CD14-positive monocyte (primary cell): ENCODE measurements at regions of chr11 and their contacts with region 1.

Region 1: DNA sequence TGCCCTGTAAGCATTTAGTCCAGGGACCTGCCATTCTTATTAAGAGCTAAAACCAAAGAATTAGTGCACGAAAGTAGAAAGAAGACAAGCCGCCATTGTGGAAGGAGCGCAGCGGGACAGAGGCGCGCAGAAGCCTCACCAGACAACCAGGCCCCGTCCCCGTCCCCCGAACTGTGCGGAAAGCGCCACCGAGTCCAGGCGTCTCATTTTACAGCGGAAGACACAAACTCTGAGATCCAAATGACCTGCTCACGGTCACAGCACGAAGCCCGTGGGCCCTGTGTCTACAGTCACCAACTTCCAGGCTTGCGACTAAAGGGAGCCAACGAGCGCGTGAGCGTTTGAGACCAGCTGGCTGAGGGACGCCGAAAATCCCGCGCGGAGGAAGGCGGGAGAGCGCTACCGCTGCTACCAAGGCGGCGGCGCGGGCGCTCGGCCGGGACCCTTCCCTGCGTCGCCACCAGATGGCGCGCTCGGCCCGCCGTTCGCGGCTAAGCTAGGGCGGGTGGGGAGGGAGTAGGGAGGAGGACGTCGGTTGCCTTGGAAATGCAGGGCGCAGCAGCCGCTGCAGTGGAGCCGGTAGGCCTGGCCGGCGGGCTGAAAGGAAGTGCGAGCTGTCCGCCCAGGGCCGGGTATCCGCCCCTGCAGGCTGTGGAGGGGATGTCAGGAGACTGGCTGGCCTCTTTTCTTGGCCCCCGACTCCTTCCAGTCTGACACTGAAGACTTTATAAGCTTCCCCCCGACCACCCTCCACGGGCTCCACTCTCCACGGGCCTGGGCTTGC is 434 bp upstream of the CCDC83 start:
- DNase-seq: peak; percentile 93 to 95 (median 93)
- H3K4me3 ChIP-seq: peak overlapping the region; percentile 46 to 82 (median 52)
- H3K4me3 Mint-ChIP-seq: peak overlapping the region; percentile 93 to 96
- H3K27ac ChIP-seq: peak overlapping the region; percentile 61 to 76
- H3K27ac Mint-ChIP-seq: peak overlapping the region; percentile 77 to 93 (median 87)
- H3K4me1 ChIP-seq: peaks cover 10 to 15% of the 10 kb centered on the region in 2 donors
- H3K4me1 Mint-ChIP-seq: peaks cover 7% of the 10 kb centered on the region
- H3K27me3 ChIP-seq: no peaks in the 10 kb centered on the region
- H3K27me3 Mint-ChIP-seq: peaks cover 0 to 3% (median 0%) of the 10 kb centered on the region in 3 donors
- CTCF ChIP-seq: peak; percentile 95

Region 2: DNA sequence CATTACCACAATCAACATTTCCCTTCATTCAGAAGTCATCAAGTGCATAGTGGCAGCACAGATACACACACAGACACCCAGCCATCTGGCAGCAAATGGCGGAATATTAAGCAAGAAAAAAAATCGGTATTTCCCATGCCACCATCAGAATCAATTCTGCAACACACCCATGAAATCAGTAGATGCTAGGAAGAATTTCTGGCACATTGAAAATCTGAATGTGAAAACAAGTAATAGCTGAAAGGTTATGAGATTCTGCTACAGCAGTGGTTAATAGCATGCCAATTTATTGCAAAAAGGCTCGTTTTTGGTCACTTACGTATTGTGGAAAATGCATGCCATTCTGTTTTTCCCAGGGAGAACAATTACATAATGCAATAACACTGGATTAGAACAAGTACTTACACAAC is 123.0 kb after region 1 on chr11:
- intact Hi-C with region 1: loop called in 1 of 2 experiments (anchors 10 kb)
- DNase-seq: no peak
- H3K4me3 ChIP-seq: no peak overlapping the region
- H3K4me3 Mint-ChIP-seq: no peak overlapping the region
- H3K27ac ChIP-seq: no peak overlapping the region
- H3K27ac Mint-ChIP-seq: no peak overlapping the region
- H3K4me1 ChIP-seq: no peaks in the 10 kb centered on the region
- H3K4me1 Mint-ChIP-seq: no peaks in the 10 kb centered on the region
- H3K27me3 ChIP-seq: no peaks in the 10 kb centered on the region
- H3K27me3 Mint-ChIP-seq: no peaks in the 10 kb centered on the region
- CTCF ChIP-seq: no peak

Region 3: GRCh38 chr11:86218125-86219084 is 363.7 kb after region 1 on chr11:
- intact Hi-C with region 1: loop called in 1 of 2 experiments (anchors 10 kb)
- DNase-seq: peak; percentile 58 to 77 (median 76)
- H3K4me3 ChIP-seq: peak overlapping the region in 1 of 3 experiments; percentile 47
- H3K4me3 Mint-ChIP-seq: peak overlapping the region; percentile 56 to 73
- H3K27ac ChIP-seq: no peak overlapping the region
- H3K27ac Mint-ChIP-seq: peak overlapping the region in 3 of 7 donors; percentile 10 to 68 (median 51)
- H3K4me1 ChIP-seq: peaks cover 19 to 22% of the 10 kb centered on the region in 2 donors
- H3K4me1 Mint-ChIP-seq: peaks cover 28% of the 10 kb centered on the region
- H3K27me3 ChIP-seq: no peaks in the 10 kb centered on the region
- H3K27me3 Mint-ChIP-seq: peaks cover 0 to 2% (median 0%) of the 10 kb centered on the region in 3 donors
- CTCF ChIP-seq: peak; percentile 94

Region 4: DNA sequence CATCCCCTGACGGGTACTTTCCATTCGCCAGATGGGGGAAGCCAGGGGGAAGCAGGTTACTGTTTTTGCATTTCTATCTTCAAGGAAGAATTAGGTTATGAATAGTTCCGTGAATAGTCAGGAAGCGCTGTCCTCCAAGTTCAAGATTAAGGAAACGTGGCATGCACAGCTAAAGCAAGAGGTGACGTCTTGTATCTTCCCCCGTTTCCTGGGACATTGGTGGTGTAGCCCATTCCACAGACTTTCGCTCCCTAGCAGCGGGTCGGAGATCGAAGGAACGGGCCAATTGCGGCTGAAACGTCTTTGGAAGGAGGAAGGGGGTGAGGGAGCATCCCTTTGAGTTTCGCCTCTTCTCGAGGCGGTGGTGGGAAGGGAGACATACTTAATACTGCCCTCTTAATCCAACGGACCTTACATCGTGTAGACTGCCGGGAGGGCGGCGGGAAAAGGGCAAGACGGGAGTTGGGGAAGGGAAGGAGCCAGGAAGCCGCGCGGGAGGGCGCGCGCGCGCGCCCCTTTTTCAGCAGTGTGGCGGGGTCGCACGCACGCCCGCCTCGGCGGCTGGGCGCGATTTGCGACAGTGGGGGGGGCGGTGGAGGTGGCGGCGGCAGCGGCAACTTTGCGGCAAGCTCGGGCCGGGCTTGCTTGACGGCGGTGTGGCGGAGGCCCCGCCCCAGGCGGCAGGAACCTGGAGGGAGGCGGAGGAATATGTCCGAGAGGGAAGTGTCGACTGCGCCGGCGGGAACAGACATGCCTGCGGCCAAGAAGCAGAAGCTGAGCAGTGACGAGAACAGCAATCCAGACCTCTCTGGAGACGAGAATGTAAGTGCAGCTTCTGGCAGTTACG is 390.0 kb after region 1 on chr11 and contains the start of gene EED:
- intact Hi-C with region 1: loop called in 1 of 2 experiments (anchors 10 kb)
- DNase-seq: peak; percentile 93 to 96 (median 95)
- H3K4me3 ChIP-seq: peak within 1 kb of the TSS; percentile 69 to 100 (median 99)
- H3K4me3 Mint-ChIP-seq: peak within 1 kb of the TSS in 1 of 2 donors; percentile 20
- H3K27ac ChIP-seq: peak within 1 kb of the TSS; percentile 95 to 99
- H3K27ac Mint-ChIP-seq: no peak within 1 kb of the TSS
- H3K4me1 ChIP-seq: peaks cover 23 to 25% of the 10 kb centered on the region in 2 donors
- H3K4me1 Mint-ChIP-seq: peaks cover 29% of the 10 kb centered on the region
- H3K27me3 ChIP-seq: no peaks in the 10 kb centered on the region
- H3K27me3 Mint-ChIP-seq: peaks cover 0 to 3% (median 0%) of the 10 kb centered on the region in 3 donors
- CTCF ChIP-seq: no peak
- polyA plus RNA-seq, gene EED: 2.3 to 17.8 (median 5.1) TPM

Region 5: DNA sequence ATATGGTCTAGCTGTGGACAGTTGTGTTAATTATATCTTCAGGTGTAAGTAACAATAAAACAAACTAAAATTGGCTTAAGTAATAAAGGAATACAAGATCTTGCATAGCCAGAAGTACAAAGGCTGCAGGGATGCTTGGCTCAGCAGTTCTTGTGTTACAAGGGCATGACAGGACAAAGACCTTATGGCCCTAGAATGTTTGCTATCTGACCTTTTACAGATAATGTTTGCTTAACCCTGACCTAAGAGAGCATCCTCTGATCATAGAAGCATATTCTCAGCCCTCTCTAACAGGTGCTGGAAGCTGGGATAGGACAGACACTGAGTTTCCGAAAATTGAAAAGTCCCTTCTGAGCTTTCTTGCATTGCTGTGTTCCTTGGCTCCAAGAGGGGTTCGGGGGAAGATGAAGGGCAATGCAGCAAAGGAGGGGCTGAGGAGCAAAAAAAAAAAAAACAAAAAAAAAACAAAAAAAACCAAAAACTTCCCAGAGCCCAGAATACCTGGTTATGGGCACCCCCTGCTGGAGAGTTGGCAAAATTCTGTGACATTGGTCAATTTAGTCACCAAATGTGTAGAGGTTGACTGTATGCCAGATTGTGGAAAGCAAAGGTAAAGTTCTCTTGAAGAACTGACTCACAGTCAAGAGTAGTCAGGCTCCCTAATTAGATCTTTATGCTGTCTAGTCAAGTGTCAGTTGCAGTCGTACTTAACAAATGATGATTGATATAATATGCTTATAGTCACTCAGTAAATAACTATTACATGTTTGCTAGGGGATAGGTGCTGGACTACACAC is 436.9 kb after region 1 on chr11:
- intact Hi-C with region 1: loop called in 1 of 2 experiments (anchors 10 kb)
- DNase-seq: peak; percentile 21 to 48 (median 35)
- H3K4me3 ChIP-seq: no peak overlapping the region
- H3K4me3 Mint-ChIP-seq: no peak overlapping the region
- H3K27ac ChIP-seq: no peak overlapping the region
- H3K27ac Mint-ChIP-seq: no peak overlapping the region
- H3K4me1 ChIP-seq: no peaks in the 10 kb centered on the region
- H3K4me1 Mint-ChIP-seq: peaks cover 7% of the 10 kb centered on the region
- H3K27me3 ChIP-seq: no peaks in the 10 kb centered on the region
- H3K27me3 Mint-ChIP-seq: peaks cover 0 to 3% (median 2%) of the 10 kb centered on the region in 3 donors
- CTCF ChIP-seq: peak; percentile 82